ENCODE measurements at regions of chr10 and their contacts with region 1.

Region 1: GRCh38 chr10:3873728-3874461 is 88.9 kb upstream of the KLF6 start:
- DNase-seq: peak in 4 of 14 experiments; percentile 35 to 93 (median 91)
- ATAC-seq: peak; percentile 47
- H3K4me3 ChIP-seq: no peak overlapping the region
- H3K4me3 Mint-ChIP-seq: peak overlapping the region; percentile 72
- H3K27ac ChIP-seq: peak overlapping the region; percentile 81 to 89
- H3K27ac Mint-ChIP-seq: peak overlapping the region; percentile 84
- H3K4me1 ChIP-seq: peaks cover 52% of the 10 kb centered on the region
- H3K4me1 Mint-ChIP-seq: peaks cover 65% of the 10 kb centered on the region
- H3K27me3 ChIP-seq: no peaks in the 10 kb centered on the region
- H3K27me3 Mint-ChIP-seq: no peaks in the 10 kb centered on the region
- CTCF ChIP-seq: no peak

Region 2: DNA sequence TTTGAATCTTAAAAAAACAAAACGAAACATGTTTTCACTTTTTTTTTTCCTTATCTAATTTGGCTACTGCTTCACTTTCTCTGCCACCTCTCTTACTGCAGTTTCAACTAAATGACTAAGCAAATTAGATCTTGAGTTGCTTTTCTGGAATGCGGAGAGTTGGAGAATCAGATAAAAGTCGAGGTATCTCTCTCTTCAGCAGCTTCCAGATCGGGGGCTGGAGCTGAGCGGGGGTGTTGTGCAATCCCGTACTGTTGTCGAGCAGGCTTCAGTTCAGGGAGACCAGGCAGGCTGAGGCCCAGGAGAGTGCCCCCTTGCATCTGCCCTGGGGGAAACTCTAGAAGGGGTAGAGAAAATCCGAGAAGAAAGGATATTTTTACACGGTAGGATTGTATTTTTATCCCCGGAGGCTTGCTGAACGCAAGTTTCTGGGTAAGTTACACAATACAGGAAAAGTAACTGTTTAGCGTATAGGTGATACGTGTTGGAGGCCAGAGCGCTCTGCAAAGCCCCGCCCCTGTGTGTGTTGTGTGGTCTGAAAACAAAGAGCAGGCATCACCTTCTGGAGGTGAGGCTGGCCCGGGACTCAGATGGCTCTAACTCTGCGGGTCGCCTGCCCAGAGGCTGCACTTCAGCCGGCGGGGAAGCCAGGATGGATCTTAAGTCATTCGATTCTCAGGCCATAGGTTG is 205.5 kb before region 1 on chr10:
- CTCF ChIA-PET with region 1: no interaction called
- POLR2A ChIA-PET with region 1: no interaction called
- intact Hi-C with region 1: loop called in 1 of 2 experiments (anchors 5 kb)
- DNase-seq: peak; percentile 49 to 89 (median 65)
- ATAC-seq: peak; percentile 90
- H3K4me3 ChIP-seq: peak overlapping the region; percentile 66
- H3K4me3 Mint-ChIP-seq: peak overlapping the region; percentile 89
- H3K27ac ChIP-seq: peak overlapping the region; percentile 65 to 88
- H3K27ac Mint-ChIP-seq: peak overlapping the region; percentile 93
- H3K4me1 ChIP-seq: peaks cover 49% of the 10 kb centered on the region
- H3K4me1 Mint-ChIP-seq: peaks cover 44% of the 10 kb centered on the region
- H3K27me3 ChIP-seq: no peaks in the 10 kb centered on the region
- H3K27me3 Mint-ChIP-seq: no peaks in the 10 kb centered on the region
- CTCF ChIP-seq: no peak

Region 3: DNA sequence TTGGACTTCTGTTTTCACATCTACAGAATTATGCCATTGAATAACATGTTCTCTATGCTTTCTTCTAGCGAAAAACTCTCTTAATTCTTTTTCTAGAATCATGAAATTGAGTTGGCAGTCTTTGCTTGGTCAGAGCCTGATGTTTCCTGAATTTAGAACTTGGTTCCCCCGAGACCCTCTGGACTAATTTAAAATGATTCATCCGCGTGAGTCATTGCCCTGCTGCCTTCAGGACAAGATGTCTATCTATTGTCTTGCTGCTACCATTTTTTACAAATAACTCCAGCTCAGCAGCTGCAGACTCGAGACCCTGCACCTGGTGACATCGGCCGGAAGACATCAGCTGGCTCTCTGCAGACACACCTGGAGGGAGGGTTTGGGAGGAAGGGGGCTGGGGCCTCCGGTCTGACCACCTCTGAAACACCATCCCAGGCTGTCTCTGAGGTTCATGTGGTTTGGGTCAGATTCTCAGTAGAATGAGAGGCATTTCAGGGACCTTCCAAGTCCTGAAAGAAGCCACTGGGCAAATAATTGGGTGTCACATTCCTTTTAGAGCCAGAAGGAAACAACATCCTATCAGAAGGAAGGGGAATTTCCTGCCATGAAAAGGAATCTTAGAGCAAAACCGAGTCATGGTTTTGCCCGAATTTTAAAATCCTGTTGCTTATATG is 68.0 kb before region 1 on chr10:
- CTCF ChIA-PET with region 1: no interaction called
- POLR2A ChIA-PET with region 1: interaction called, 12 read pairs
- intact Hi-C with region 1: loop called (anchors 1 to 5 kb)
- DNase-seq: peak in 11 of 14 experiments; percentile 38 to 85 (median 57)
- ATAC-seq: peak; percentile 2
- H3K4me3 ChIP-seq: peak overlapping the region; percentile 1
- H3K4me3 Mint-ChIP-seq: peak overlapping the region; percentile 66
- H3K27ac ChIP-seq: peak overlapping the region; percentile 97 to 98
- H3K27ac Mint-ChIP-seq: no peak overlapping the region
- H3K4me1 ChIP-seq: peaks cover 90% of the 10 kb centered on the region
- H3K4me1 Mint-ChIP-seq: peaks cover 14% of the 10 kb centered on the region
- H3K27me3 ChIP-seq: no peaks in the 10 kb centered on the region
- H3K27me3 Mint-ChIP-seq: no peaks in the 10 kb centered on the region
- CTCF ChIP-seq: no peak

Region 4: GRCh38 chr10:3811291-3811870 is 62.5 kb before region 1 on chr10:
- CTCF ChIA-PET with region 1: no interaction called
- POLR2A ChIA-PET with region 1: interaction called, 12 read pairs
- intact Hi-C with region 1: loop called in 1 of 2 experiments (anchors 5 kb)
- DNase-seq: peak in 7 of 14 experiments; percentile 24 to 85 (median 48)
- ATAC-seq: peak; percentile 47
- H3K4me3 ChIP-seq: peak overlapping the region; percentile 35
- H3K4me3 Mint-ChIP-seq: peak overlapping the region; percentile 75
- H3K27ac ChIP-seq: peak overlapping the region; percentile 77 to 93
- H3K27ac Mint-ChIP-seq: no peak overlapping the region
- H3K4me1 ChIP-seq: peaks cover 64% of the 10 kb centered on the region
- H3K4me1 Mint-ChIP-seq: peaks cover 48% of the 10 kb centered on the region
- H3K27me3 ChIP-seq: no peaks in the 10 kb centered on the region
- H3K27me3 Mint-ChIP-seq: no peaks in the 10 kb centered on the region
- CTCF ChIP-seq: no peak

Region 5: GRCh38 chr10:3828404-3829155 is 45.3 kb before region 1 on chr10:
- CTCF ChIA-PET with region 1: no interaction called
- POLR2A ChIA-PET with region 1: interaction called, 20 read pairs
- intact Hi-C with region 1: no loop called
- DNase-seq: peak in 5 of 14 experiments; percentile 37 to 85 (median 72)
- ATAC-seq: peak; percentile 64
- H3K4me3 ChIP-seq: peak overlapping the region; percentile 53
- H3K4me3 Mint-ChIP-seq: peak overlapping the region; percentile 88
- H3K27ac ChIP-seq: peak overlapping the region; percentile 61 to 65
- H3K27ac Mint-ChIP-seq: peak overlapping the region; percentile 85
- H3K4me1 ChIP-seq: peaks cover 17% of the 10 kb centered on the region
- H3K4me1 Mint-ChIP-seq: peaks cover 21% of the 10 kb centered on the region
- H3K27me3 ChIP-seq: no peaks in the 10 kb centered on the region
- H3K27me3 Mint-ChIP-seq: no peaks in the 10 kb centered on the region
- CTCF ChIP-seq: no peak

Region 6: GRCh38 chr10:3852147-3852904 is 21.6 kb before region 1 on chr10:
- CTCF ChIA-PET with region 1: no interaction called
- POLR2A ChIA-PET with region 1: interaction called, 17 read pairs
- intact Hi-C with region 1: loop called in 1 of 2 experiments (anchors 2 kb)
- DNase-seq: peak in 9 of 14 experiments; percentile 46 to 92 (median 59)
- ATAC-seq: peak; percentile 94
- H3K4me3 ChIP-seq: no peak overlapping the region
- H3K4me3 Mint-ChIP-seq: peak overlapping the region; percentile 11
- H3K27ac ChIP-seq: peak overlapping the region in 1 of 2 donors; percentile 80
- H3K27ac Mint-ChIP-seq: peak overlapping the region; percentile 77
- H3K4me1 ChIP-seq: peaks cover 15% of the 10 kb centered on the region
- H3K4me1 Mint-ChIP-seq: peaks cover 23% of the 10 kb centered on the region
- H3K27me3 ChIP-seq: no peaks in the 10 kb centered on the region
- H3K27me3 Mint-ChIP-seq: no peaks in the 10 kb centered on the region
- CTCF ChIP-seq: no peak

Region 7: GRCh38 chr10:3948843-3949242 is 74.9 kb after region 1 on chr10:
- CTCF ChIA-PET with region 1: no interaction called
- POLR2A ChIA-PET with region 1: interaction called, 8 read pairs
- intact Hi-C with region 1: loop called in 1 of 2 experiments (anchors 10 kb)
- DNase-seq: peak; percentile 53 to 95 (median 77)
- ATAC-seq: peak; percentile 89
- H3K4me3 ChIP-seq: peak overlapping the region; percentile 3
- H3K4me3 Mint-ChIP-seq: peak overlapping the region; percentile 69
- H3K27ac ChIP-seq: peak overlapping the region; percentile 31 to 67
- H3K27ac Mint-ChIP-seq: peak overlapping the region; percentile 88
- H3K4me1 ChIP-seq: peaks cover 53% of the 10 kb centered on the region
- H3K4me1 Mint-ChIP-seq: peaks cover 45% of the 10 kb centered on the region
- H3K27me3 ChIP-seq: no peaks in the 10 kb centered on the region
- H3K27me3 Mint-ChIP-seq: no peaks in the 10 kb centered on the region
- CTCF ChIP-seq: no peak

Measured in CD4-positive, alpha-beta T cell (primary cell).